Stomach (tissue), 19 donors: ENCODE measurements at regions of chr19 and their contacts with region 1.

Region 1: GRCh38 chr19:1094975-1095701 is at the start of gene POLR2E:
- DNase-seq: peak; percentile 99
- H3K4me3 ChIP-seq: peak within 1 kb of the TSS; percentile 96 to 100 (median 100)
- H3K27ac ChIP-seq: peak within 1 kb of the TSS; percentile 6 to 88 (median 86)
- H3K4me1 ChIP-seq: peaks cover 34 to 74% (median 54%) of the 10 kb centered on the region in 4 donors
- H3K27me3 ChIP-seq: no peaks in the 10 kb centered on the region
- CTCF ChIP-seq: no peak
- EP300 ChIP-seq: no peak
- POLR2A ChIP-seq: peak in 1 of 4 donors; percentile 83
- total RNA-seq, gene POLR2E: 24.5 to 361 (median 40.6) TPM

Region 2: DNA sequence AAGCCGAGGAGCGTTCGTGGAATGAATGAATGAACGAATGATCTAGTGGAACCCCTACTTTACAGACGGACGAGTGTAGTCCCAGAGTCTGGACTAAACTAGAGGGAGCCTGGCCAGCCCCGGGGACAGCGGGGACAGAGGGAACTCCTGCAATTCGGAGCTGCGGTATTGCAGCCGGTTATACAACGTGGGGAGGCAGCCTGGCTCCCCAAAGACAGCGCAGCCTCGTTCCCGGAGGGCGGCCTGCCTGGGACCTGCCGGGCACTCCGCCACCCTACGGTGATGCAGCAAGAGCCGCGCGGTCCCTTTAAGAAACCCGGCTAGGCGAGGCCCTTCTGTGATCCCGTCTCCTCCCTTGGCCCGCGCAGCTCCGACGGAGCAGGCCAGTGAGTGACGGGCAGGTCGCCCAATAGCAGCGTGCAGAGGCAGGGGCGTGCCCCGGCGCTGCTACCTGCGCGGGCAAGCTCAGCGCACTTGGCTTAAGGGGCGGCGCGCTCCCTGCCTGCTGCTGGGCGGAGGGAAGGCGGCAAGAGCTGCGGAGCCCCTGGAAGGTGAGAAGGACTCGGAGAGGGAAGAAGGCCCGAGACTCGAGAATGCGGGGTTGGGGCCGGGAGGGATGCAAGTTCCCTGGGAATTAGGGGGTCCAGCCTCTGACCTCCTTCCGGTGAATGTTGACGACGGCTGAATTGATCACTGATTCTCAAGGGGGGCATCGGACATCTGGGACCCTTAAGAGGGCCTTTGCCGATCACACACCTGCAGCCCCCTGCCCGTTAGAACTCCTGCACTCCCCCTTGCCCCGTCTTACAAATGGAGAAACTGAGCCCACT is 55.3 kb before region 1 on chr19 and contains the start of gene ABCA7:
- intact Hi-C with region 1: loop called (anchors 10 kb)
- DNase-seq: peak; percentile 99 to 100
- H3K4me3 ChIP-seq: peak within 1 kb of the TSS; percentile 53 to 72 (median 58)
- H3K27ac ChIP-seq: peak within 1 kb of the TSS; percentile 34 to 84 (median 74)
- H3K4me1 ChIP-seq: peaks cover 26 to 78% (median 45%) of the 10 kb centered on the region in 4 donors
- H3K27me3 ChIP-seq: peaks cover 0 to 18% (median 0%) of the 10 kb centered on the region in 3 donors
- CTCF ChIP-seq: no peak
- EP300 ChIP-seq: no peak
- POLR2A ChIP-seq: peak in 2 of 4 donors; percentile 40 to 61
- total RNA-seq, gene ABCA7: 5.1 to 144 (median 38.8) TPM

Region 3: GRCh38 chr19:1205114-1206062 is 110.2 kb after region 1 on chr19 and contains the start of gene STK11:
- intact Hi-C with region 1: no loop called
- DNase-seq: peak; percentile 99 to 100
- H3K4me3 ChIP-seq: peak within 1 kb of the TSS; percentile 73 to 91 (median 80)
- H3K27ac ChIP-seq: peak within 1 kb of the TSS; percentile 77 to 90 (median 86)
- H3K4me1 ChIP-seq: peaks cover 43 to 65% (median 60%) of the 10 kb centered on the region in 4 donors
- H3K27me3 ChIP-seq: no peaks in the 10 kb centered on the region
- CTCF ChIP-seq: no peak
- EP300 ChIP-seq: no peak
- POLR2A ChIP-seq: no peak
- total RNA-seq, gene STK11: 55.1 to 368 (median 82.3) TPM